MCF 10A (cell line): ENCODE measurements at regions of chr5 and their contacts with region 1.

Region 1: GRCh38 chr5:150449517-150450339 is at the start of gene RPS14:
- DNase-seq: peak; percentile 98
- H3K4me3 Mint-ChIP-seq: peak within 1 kb of the TSS; percentile 85
- H3K27ac Mint-ChIP-seq: peak within 1 kb of the TSS; percentile 100
- H3K4me1 Mint-ChIP-seq: peaks cover 22% of the 10 kb centered on the region
- H3K27me3 Mint-ChIP-seq: no peaks in the 10 kb centered on the region
- CTCF ChIP-seq: peak; percentile 92
- total RNA-seq, gene RPS14: 5,481 and 5,921 TPM in 2 replicates

Region 2: GRCh38 chr5:150464554-150465012 is 14.9 kb after region 1 on chr5:
- CTCF ChIA-PET with region 1: interaction called, 9 read pairs
- POLR2A ChIA-PET with region 1: interaction called, 15 read pairs
- intact Hi-C with region 1: no loop called
- DNase-seq: no peak
- H3K4me3 Mint-ChIP-seq: no peak overlapping the region
- H3K27ac Mint-ChIP-seq: no peak overlapping the region
- H3K4me1 Mint-ChIP-seq: peaks cover 10% of the 10 kb centered on the region
- H3K27me3 Mint-ChIP-seq: no peaks in the 10 kb centered on the region
- CTCF ChIP-seq: no peak

Region 3: DNA sequence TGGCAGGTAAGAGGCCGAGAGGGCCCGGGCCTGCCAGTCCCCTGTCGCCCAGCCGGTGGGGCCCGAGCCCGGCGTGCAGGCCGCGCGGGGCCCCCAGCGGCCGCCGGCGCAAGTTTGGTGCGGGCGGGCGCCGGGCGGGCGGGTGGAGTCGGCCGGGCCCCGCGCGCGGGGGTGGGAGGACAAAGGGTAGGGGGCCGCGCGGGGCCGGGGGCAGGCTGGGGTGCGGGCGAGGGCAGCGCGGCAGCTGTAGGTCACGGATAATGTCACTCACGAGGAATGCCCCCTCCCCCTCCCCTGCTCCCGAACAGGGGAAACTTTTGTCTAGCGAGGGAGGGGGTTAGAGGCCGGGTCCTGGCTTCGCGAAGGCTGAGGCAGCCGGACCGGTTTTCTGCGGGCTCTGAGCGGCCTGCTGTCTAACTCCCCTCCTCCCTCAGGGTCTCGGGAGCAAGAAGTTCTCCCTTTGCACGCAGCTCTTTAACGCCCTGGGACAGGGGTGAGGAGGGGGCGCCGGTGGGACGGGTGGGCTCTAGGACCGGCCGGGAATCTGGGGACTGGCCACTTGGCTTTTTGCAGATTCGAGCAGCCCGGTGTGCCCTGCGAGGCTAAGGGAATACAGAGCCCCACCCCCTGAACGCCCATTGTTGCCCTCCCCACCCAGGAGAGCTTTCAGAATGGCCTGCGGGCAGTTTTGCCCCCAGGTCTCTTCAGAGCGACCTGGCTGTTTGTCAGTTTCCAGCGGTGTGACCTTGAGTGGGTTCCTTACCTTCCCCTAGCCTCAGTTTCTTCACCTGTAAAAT is 36.9 kb after region 1 on chr5:
- CTCF ChIA-PET with region 1: interaction called, 28 read pairs
- POLR2A ChIA-PET with region 1: interaction called, 26 read pairs
- intact Hi-C with region 1: no loop called
- DNase-seq: peak; percentile 51
- H3K4me3 Mint-ChIP-seq: peak overlapping the region; percentile 72
- H3K27ac Mint-ChIP-seq: peak overlapping the region; percentile 63
- H3K4me1 Mint-ChIP-seq: peaks cover 43% of the 10 kb centered on the region
- H3K27me3 Mint-ChIP-seq: no peaks in the 10 kb centered on the region
- CTCF ChIP-seq: peak; percentile 13

Region 4: GRCh38 chr5:150589871-150590601 is 140.3 kb after region 1 on chr5:
- CTCF ChIA-PET with region 1: no interaction called
- POLR2A ChIA-PET with region 1: no interaction called
- intact Hi-C with region 1: no loop called
- DNase-seq: no peak
- H3K4me3 Mint-ChIP-seq: no peak overlapping the region
- H3K27ac Mint-ChIP-seq: no peak overlapping the region
- H3K4me1 Mint-ChIP-seq: peaks cover 7% of the 10 kb centered on the region
- H3K27me3 Mint-ChIP-seq: no peaks in the 10 kb centered on the region
- CTCF ChIP-seq: no peak